ENCODE measurements at regions of chr7 and their contacts with region 1.

Region 1: GRCh38 chr7:143362131-143363015 is at the start of gene FAM131B:
- DNase-seq: peak; percentile 44
- ATAC-seq: peak; percentile 54
- H3K4me3 ChIP-seq: peak within 1 kb of the TSS; percentile 25 to 72 (median 54)
- H3K4me3 Mint-ChIP-seq: peak within 1 kb of the TSS; percentile 87
- H3K27ac ChIP-seq: no peak within 1 kb of the TSS
- H3K27ac Mint-ChIP-seq: peak within 1 kb of the TSS; percentile 59
- H3K4me1 ChIP-seq: peaks cover 12% of the 10 kb centered on the region in 2 donors
- H3K4me1 Mint-ChIP-seq: peaks cover 13% of the 10 kb centered on the region
- H3K27me3 ChIP-seq: peaks cover 0 to 61% (median 36%) of the 10 kb centered on the region in 4 experiments
- H3K27me3 Mint-ChIP-seq: peaks cover 64% of the 10 kb centered on the region
- CTCF ChIP-seq: no peak
- total RNA-seq, gene FAM131B: 0.05 and 0.12 TPM in 2 replicates

Region 2: DNA sequence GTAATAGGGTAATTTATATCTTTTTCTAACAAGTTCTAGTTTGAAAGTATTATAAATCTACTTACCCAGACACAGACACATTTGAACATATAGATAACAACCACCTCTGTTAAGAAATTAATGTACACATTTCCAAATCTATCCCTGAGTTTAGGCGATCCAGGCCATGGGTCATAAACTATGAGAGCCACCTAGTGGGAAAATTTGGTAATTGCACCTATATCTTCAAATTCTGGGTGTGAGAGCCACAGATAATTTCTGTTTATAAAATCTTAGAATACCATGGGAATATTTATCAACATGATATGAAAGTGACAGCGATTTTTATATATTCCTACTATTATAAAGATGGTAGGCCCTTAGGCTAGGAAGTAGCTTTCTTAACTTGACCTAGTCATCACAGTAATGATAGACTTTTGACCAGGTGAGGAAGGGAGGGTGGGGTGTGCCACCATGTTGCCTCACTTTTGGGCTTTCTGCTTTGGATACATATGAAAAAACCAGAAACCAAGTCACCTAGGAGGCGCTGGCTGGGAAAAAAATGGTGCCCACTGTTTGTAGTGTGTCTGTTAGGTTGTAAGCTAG is 54.3 kb after region 1 on chr7:
- CTCF ChIA-PET with region 1: interaction called, 5 read pairs
- POLR2A ChIA-PET with region 1: no interaction called
- intact Hi-C with region 1: loop called (anchors 10 kb)
- DNase-seq: peak; percentile 65
- ATAC-seq: peak; percentile 63
- H3K4me3 ChIP-seq: no peak overlapping the region
- H3K4me3 Mint-ChIP-seq: no peak overlapping the region
- H3K27ac ChIP-seq: no peak overlapping the region
- H3K27ac Mint-ChIP-seq: no peak overlapping the region
- H3K4me1 ChIP-seq: no peaks in the 10 kb centered on the region
- H3K4me1 Mint-ChIP-seq: no peaks in the 10 kb centered on the region
- H3K27me3 ChIP-seq: peaks cover 0 to 33% (median 17%) of the 10 kb centered on the region in 4 experiments
- H3K27me3 Mint-ChIP-seq: peaks cover 54% of the 10 kb centered on the region
- CTCF ChIP-seq: peak; percentile 87

Region 3: DNA sequence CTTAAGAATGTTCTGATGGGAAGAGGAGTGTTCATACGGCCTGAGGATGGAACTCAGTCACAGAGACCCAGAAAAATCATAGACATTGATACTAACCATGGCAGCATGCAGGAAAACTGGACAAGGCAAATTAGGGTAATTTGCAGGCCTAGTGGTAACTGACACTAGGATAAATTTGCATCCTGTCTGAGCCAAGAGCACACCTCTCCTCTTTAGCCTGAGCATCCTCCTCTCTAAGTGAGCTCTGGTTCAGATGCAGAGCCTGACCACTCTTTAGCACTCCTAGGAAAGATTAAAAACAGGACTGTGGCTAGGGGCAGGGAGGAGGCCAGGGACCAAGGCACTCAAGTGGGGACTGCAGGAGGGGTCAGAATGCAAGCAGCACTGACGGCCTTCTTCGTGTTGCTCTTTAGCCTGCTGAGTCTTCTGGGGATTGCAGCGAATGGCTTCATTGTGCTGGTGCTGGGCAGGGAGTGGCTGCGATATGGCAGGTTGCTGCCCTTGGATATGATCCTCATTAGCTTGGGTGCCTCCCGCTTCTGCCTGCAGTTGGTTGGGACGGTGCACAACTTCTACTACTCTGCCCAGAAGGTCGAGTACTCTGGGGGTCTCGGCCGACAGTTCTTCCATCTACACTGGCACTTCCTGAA is 115.3 kb after region 1 on chr7 and contains the start of gene TAS2R41:
- CTCF ChIA-PET with region 1: no interaction called
- POLR2A ChIA-PET with region 1: no interaction called
- intact Hi-C with region 1: no loop called
- DNase-seq: no peak
- ATAC-seq: no peak
- H3K4me3 ChIP-seq: no peak within 1 kb of the TSS
- H3K4me3 Mint-ChIP-seq: no peak within 1 kb of the TSS
- H3K27ac ChIP-seq: no peak within 1 kb of the TSS
- H3K27ac Mint-ChIP-seq: no peak within 1 kb of the TSS
- H3K4me1 ChIP-seq: no peaks in the 10 kb centered on the region
- H3K4me1 Mint-ChIP-seq: no peaks in the 10 kb centered on the region
- H3K27me3 ChIP-seq: peaks cover 0 to 3% (median 0%) of the 10 kb centered on the region in 4 experiments
- H3K27me3 Mint-ChIP-seq: peaks cover 17% of the 10 kb centered on the region
- CTCF ChIP-seq: no peak
- total RNA-seq, gene TAS2R41: not detected in 2 replicates